ENCODE measurements at regions of chr16 and their contacts with region 1.

Region 1: DNA sequence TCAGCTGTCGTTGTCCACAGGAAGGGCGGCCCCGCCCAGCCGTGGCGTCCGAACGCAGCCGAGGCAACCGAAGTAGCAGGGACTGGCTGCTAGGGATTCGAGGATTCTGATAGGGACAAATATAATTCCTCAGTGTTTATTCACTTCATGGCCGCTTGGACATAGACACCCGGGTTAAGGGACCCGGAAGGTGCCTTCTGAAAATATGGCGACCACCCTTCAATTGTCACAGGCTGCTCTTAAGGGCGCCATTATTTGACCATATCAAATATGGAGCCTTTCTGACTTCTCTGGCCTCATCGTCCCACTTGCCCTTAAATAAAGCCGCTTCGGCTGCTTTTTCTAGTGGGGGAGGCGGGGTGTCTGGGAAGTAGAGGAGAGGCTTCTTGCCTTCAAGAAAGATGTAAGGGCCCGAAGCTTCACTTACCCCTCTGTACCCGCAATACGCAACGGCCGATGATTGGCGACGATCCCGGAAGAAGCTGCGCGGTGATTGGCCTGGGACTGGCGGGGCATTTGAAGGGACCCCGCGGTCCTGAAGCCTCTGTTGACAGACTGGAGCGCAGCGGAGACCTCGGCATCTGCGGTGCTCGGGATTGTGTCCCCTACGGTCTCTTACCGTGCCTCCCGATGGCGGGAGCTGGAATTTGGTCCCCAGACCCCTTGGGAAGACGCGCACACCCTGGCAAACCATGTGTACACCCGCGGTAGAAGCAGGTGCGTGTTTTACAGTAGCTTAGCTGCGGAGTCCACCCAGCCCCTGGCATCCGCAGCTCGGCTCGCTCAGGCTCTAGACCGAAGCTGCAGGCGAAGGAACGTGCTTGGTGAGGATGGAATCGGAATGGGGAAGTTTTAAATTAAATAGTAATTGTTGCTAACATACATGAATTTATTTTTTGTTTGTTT is at the start of gene ZNF688:
- DNase-seq: peak; percentile 93
- H3K4me3 Mint-ChIP-seq: peak within 1 kb of the TSS; percentile 93
- H3K27ac Mint-ChIP-seq: peak within 1 kb of the TSS; percentile 90
- H3K4me1 Mint-ChIP-seq: peaks cover 56% of the 10 kb centered on the region
- H3K27me3 Mint-ChIP-seq: no peaks in the 10 kb centered on the region
- total RNA-seq, gene ZNF688: 7.4 and 9.4 TPM in 2 replicates

Region 2: DNA sequence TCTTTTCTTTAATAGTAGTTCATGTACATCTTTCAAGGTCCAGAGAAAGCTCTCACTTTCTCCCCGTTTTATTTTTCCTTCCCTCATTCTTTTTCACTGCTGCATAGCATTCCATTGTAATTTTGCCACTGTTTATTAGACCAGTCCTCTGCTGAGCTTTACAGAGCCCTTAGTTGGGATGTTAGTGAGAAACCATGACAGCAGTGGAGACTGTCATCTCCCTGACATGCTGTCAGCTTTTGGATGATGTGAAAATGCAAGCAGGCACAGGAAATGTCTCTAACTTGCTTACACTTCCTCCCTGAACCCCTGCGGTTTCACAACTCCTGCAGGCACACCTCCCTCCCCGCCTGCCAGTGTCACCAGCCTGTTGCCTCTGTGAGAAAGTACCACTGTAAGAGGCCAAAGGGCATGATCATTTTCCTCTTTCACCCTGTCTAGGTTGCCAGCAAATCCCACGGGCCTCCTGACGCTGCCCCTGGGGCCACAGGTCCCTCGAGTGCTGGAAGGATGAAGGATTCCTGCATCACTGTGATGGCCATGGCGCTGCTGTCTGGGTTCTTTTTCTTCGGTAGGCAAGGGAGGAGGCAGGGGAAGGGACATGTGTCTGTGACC is 99.5 kb before region 1 on chr16 and contains the start of gene ITGAL:
- intact Hi-C with region 1: loop called (anchors 1 kb)
- DNase-seq: peak; percentile 81
- H3K4me3 Mint-ChIP-seq: peak within 1 kb of the TSS; percentile 96
- H3K27ac Mint-ChIP-seq: peak within 1 kb of the TSS; percentile 95
- H3K4me1 Mint-ChIP-seq: peaks cover 60% of the 10 kb centered on the region
- H3K27me3 Mint-ChIP-seq: no peaks in the 10 kb centered on the region
- total RNA-seq, gene ITGAL: 259 and 287 TPM in 2 replicates

Region 3: GRCh38 chr16:30534368-30535105 is 37.4 kb before region 1 on chr16 and contains the start of gene ZNF747:
- intact Hi-C with region 1: loop called (anchors 1 kb)
- DNase-seq: peak; percentile 88
- H3K4me3 Mint-ChIP-seq: peak within 1 kb of the TSS; percentile 98
- H3K27ac Mint-ChIP-seq: peak within 1 kb of the TSS; percentile 99
- H3K4me1 Mint-ChIP-seq: peaks cover 39% of the 10 kb centered on the region
- H3K27me3 Mint-ChIP-seq: no peaks in the 10 kb centered on the region
- total RNA-seq, gene ZNF747: 13.8 and 15.8 TPM in 2 replicates

Region 4: GRCh38 chr16:30557957-30558788 is 13.8 kb before region 1 on chr16 and contains the start of gene ZNF764:
- intact Hi-C with region 1: loop called (anchors 1 kb)
- DNase-seq: peak; percentile 97
- H3K4me3 Mint-ChIP-seq: peak within 1 kb of the TSS; percentile 90
- H3K27ac Mint-ChIP-seq: peak within 1 kb of the TSS; percentile 92
- H3K4me1 Mint-ChIP-seq: peaks cover 42% of the 10 kb centered on the region
- H3K27me3 Mint-ChIP-seq: no peaks in the 10 kb centered on the region
- total RNA-seq, gene ZNF764: 17.9 and 21.2 TPM in 2 replicates

Region 5: GRCh38 chr16:30602616-30603277 is 30.8 kb after region 1 on chr16:
- intact Hi-C with region 1: loop called (anchors 1 kb)
- DNase-seq: no peak
- H3K4me3 Mint-ChIP-seq: no peak overlapping the region
- H3K27ac Mint-ChIP-seq: peak overlapping the region; percentile 40
- H3K4me1 Mint-ChIP-seq: peaks cover 12% of the 10 kb centered on the region
- H3K27me3 Mint-ChIP-seq: no peaks in the 10 kb centered on the region

Region 6: DNA sequence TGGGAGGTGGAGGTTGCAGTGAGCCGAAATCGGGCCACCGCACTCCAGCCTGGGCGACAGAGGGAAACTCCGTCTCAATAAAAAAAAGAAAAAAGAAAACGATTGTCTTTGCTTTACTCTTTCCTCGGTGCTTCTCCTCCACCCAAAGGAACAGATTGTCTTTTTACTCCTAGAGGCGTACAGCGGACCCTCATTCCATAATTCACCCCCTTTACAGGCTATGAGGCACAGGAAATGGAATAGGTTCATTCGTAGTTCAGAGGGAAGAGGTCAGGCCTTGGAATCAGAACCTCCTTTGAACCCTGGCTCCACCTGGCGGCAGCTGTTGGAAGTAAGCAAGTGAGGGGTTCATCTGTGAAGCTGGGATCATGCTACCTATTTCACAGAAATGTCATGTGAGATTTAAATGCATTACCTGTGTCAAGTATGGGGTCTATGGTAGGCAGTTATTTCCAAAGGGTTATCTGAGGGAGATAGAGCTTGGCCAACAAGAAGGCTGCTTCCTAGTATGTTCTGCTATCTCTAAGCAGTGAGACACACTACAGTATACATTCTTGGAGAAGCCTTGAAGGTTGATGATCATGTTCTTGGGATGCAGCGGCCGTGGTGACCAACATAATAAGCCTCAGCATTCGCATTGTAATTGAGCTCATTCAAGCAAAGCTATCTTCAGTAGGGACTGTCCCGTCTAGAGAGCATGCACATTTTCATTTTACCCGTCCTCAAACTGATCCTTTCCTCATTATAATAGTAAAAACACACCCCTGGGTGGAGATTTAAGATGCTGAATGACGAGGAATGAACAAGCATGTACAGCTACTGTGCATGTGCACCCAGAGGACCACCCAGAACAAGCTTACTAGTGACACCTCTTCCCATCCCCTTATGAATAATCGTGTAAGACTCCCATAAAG is 56.9 kb after region 1 on chr16:
- intact Hi-C with region 1: loop called (anchors 1 kb)
- DNase-seq: peak; percentile 77
- H3K4me3 Mint-ChIP-seq: peak overlapping the region; percentile 52
- H3K27ac Mint-ChIP-seq: peak overlapping the region; percentile 71
- H3K4me1 Mint-ChIP-seq: peaks cover 10% of the 10 kb centered on the region
- H3K27me3 Mint-ChIP-seq: no peaks in the 10 kb centered on the region

Measured in activated T-helper 1 cell treated with anti-CD3 and anti-CD28 coated beads, Interleukin-12 subunit alpha, Interleukin-12 subunit beta, Interleukin-2, Interleukin-4 antibody, amounts not matched to agents 30 ng/mL and 10 ng/mL and 1 ng/mL, durations not matched to agents 14 hours and 24 hours and 36 hours (primary cell).